ENCODE measurements at regions of chr3 and their contacts with region 1.

Region 1: GRCh38 chr3:170357176-170357919 is at the start of gene SKIL:
- DNase-seq: peak; percentile 91 to 98
- H3K4me3 ChIP-seq: peak within 1 kb of the TSS; percentile 74
- H3K27ac ChIP-seq: peak within 1 kb of the TSS; percentile 84
- H3K4me1 ChIP-seq: peaks cover 62% of the 10 kb centered on the region
- H3K27me3 ChIP-seq: no peaks in the 10 kb centered on the region
- CTCF ChIP-seq: no peak
- total RNA-seq, gene SKIL: 119 and 138 TPM in 2 replicates

Region 2: DNA sequence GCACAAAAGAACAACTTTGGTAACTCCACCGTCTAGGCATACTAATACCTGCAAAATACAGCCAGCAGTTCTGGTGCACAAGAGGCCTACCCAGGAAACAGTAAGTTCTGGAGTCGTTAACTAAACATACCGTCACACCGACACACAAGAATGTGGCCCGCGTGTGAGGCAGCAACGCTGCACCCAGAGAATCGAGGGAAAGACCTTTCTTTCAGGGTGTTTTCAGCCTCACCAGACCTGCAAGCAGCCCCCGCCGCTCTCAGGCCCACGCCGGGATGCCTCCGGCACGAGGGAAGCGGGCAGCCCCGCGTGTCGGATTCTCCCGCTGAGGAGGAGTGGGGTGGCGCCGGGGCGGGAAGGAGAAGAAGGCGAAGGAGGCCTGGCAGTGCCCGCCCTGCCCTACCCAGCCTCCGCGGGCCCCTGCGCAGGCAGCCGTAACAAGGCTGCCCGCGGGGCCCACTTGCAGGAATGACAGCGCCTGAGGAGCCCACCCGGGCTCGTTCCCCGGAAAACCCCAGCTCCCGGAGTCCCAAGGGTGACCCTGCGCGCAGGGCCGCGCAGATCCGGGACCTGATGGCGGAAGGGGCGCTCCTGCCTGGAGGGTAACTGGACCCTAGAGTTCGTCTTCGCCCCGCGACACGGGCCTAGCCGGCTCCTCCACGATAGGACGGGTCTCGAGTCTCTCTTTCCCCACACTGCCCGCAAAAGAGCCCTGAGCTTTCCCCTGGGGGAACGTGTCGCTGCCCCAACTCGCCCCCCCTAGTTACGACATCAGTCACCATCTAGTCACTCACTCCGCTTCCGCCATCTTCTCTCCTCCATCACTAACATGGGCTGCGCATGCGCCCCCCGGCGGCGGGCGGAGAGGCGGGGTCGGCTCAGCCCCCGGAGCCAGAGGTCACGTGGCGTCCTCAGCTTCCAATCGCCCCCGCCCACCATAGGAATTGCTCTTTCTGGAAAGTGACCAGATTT is 176.2 kb before region 1 on chr3 and contains the start of gene PHC3:
- CTCF ChIA-PET with region 1: interaction called, 10 read pairs
- POLR2A ChIA-PET with region 1: no interaction called
- intact Hi-C with region 1: no loop called
- DNase-seq: peak; percentile 83 to 97
- H3K4me3 ChIP-seq: peak within 1 kb of the TSS; percentile 76
- H3K27ac ChIP-seq: peak within 1 kb of the TSS; percentile 51
- H3K4me1 ChIP-seq: peaks cover 19% of the 10 kb centered on the region
- H3K27me3 ChIP-seq: no peaks in the 10 kb centered on the region
- CTCF ChIP-seq: peak; percentile 36; the same call in 1 of the 2 replicates
- total RNA-seq, gene PHC3: 54.7 and 80.8 TPM in 2 replicates

Region 3: DNA sequence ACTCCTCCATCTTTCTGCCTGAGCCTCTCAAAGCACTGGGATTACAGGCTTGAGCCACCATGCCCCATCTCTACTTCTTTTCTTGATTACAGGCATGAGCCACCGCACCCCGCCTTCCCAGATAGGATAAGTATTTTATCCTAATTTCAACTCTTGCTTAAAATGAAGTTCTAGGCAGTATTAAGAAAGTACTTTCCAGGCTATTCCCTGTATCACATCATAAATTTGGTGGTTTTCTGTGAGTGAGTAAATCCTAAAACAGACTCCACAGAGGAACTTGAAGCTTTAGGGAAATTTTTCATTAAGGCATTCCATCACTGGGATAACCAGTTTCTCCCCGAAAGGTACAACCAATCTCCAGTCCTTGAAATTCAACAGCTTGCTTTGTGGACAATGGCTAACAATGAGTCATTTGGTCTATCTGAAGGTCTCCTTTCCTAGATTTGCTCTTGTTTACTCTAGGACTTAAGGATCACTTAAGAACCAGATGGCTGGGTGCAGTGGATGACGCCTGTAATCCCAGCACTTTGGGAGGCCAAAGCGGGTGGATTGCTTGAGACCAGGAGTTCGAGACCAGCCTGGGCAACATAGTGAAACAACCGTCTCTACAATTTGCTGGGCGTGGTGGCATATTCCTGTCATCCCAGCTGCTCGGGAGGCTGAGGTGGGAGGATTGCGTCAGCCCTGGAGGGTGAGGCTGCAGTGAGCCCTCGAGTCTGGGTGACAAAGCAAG is 49.5 kb before region 1 on chr3:
- CTCF ChIA-PET with region 1: no interaction called
- POLR2A ChIA-PET with region 1: interaction called, 3 read pairs
- intact Hi-C with region 1: loop called (anchors 1 kb)
- DNase-seq: peak; percentile 59 to 99
- H3K4me3 ChIP-seq: no peak overlapping the region
- H3K27ac ChIP-seq: peak overlapping the region; percentile 42
- H3K4me1 ChIP-seq: peaks cover 19% of the 10 kb centered on the region
- H3K27me3 ChIP-seq: no peaks in the 10 kb centered on the region
- CTCF ChIP-seq: no peak

Region 4: GRCh38 chr3:170330366-170330765 is 27.0 kb before region 1 on chr3:
- CTCF ChIA-PET with region 1: no interaction called
- POLR2A ChIA-PET with region 1: interaction called, 3 read pairs
- intact Hi-C with region 1: loop called (anchors 1 kb)
- DNase-seq: peak; percentile 86 to 95
- H3K4me3 ChIP-seq: no peak overlapping the region
- H3K27ac ChIP-seq: peak overlapping the region; percentile 81
- H3K4me1 ChIP-seq: peaks cover 45% of the 10 kb centered on the region
- H3K27me3 ChIP-seq: no peaks in the 10 kb centered on the region
- CTCF ChIP-seq: no peak

Region 5: DNA sequence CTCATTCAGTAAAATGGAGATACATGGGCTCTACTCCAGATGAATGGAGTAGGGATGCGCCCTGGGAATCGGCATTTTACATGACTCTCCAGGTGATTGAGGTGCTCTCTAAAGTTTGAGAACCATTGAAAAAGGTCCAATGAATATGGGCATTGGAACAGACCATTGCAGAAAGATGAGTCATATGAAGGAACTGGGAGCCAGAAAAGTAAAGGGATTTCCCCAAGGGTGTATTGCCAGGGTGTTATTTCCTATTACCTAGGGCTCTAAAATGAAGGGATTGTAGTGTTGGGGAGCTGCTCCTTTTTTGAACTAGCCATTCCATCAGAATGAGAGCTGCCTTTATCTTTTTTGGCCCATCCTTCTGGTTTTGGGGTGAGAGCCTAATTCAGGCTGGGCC is 83.0 kb after region 1 on chr3:
- CTCF ChIA-PET with region 1: no interaction called
- POLR2A ChIA-PET with region 1: no interaction called
- intact Hi-C with region 1: no loop called
- DNase-seq: no peak
- H3K4me3 ChIP-seq: no peak overlapping the region
- H3K27ac ChIP-seq: no peak overlapping the region
- H3K4me1 ChIP-seq: no peaks in the 10 kb centered on the region
- H3K27me3 ChIP-seq: no peaks in the 10 kb centered on the region
- CTCF ChIP-seq: no peak

Region 6: GRCh38 chr3:170506556-170506955 is 149.2 kb after region 1 on chr3:
- CTCF ChIA-PET with region 1: no interaction called
- POLR2A ChIA-PET with region 1: interaction called, 11 read pairs
- intact Hi-C with region 1: no loop called
- DNase-seq: peak; percentile 27 to 74
- H3K4me3 ChIP-seq: peak overlapping the region; percentile 5; the same call in 1 of the 2 replicates
- H3K27ac ChIP-seq: peak overlapping the region; percentile 68
- H3K4me1 ChIP-seq: peaks cover 23% of the 10 kb centered on the region
- H3K27me3 ChIP-seq: no peaks in the 10 kb centered on the region
- CTCF ChIP-seq: no peak

Region 7: GRCh38 chr3:170584585-170585007 is 227.2 kb after region 1 on chr3:
- CTCF ChIA-PET with region 1: no interaction called
- POLR2A ChIA-PET with region 1: no interaction called
- intact Hi-C with region 1: no loop called
- DNase-seq: peak in 1 of 2 experiments; percentile 64
- H3K4me3 ChIP-seq: no peak overlapping the region
- H3K27ac ChIP-seq: no peak overlapping the region
- H3K4me1 ChIP-seq: no peaks in the 10 kb centered on the region
- H3K27me3 ChIP-seq: 0 out of 2 replicates have a peak, but pooled peaks cover 4% of the 10 kb centered on the region
- CTCF ChIP-seq: no peak

Region 8: DNA sequence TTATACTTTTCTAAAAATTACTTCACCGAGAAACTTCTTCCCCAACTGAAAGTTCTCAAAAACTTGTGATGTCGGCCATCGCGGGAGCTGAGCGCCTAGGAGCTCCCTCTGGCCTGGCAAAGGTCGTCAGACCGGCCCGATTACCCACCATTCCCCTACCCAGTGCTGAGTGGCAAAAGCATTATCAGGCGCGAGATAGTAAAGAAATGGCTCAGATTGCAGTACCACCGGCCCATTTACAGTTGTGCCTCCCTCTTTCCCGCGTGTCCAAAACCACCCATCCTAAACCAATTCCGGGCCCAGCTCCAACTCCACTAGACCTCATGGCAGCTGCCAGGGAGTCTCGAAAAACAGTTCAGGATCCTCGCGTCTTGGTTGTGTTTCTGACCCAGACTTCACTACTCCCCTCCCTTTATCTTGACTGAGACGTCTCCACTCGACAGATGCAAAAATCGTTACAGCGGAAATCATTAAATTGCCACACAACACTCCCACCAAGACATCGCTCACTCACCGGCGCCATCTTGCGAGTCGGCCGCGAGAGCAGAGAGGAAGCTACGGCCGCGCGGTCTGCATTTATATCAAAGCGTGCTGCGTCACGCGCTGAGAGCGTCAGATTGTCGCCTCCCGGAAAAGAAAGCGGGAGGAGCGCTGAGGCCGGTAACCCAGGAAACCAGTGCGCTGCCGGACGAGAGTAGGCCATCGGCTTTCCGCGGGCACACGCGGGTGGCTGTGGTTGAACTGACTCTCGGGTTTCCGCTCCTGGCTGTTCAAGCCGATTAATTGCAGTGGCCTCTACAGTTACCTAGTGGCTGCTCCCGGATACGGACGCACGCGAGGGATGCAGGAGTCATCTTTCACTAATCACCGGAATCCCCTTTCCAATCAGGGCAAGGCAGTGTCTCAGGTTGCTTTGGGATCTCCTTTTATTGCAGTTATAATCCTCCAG is 512.6 kb after region 1 on chr3 and contains the start of gene RPL22L1:
- CTCF ChIA-PET with region 1: no interaction called
- POLR2A ChIA-PET with region 1: interaction called, 15 read pairs
- intact Hi-C with region 1: no loop called
- DNase-seq: peak; percentile 96
- H3K4me3 ChIP-seq: peak within 1 kb of the TSS; percentile 92
- H3K27ac ChIP-seq: peak within 1 kb of the TSS; percentile 94
- H3K4me1 ChIP-seq: peaks cover 35% of the 10 kb centered on the region
- H3K27me3 ChIP-seq: no peaks in the 10 kb centered on the region
- CTCF ChIP-seq: no peak; the same call in 1 of the 2 replicates
- total RNA-seq, gene RPL22L1: 57.3 and 60.3 TPM in 2 replicates

Measured in PC-9 (cell line).